Spleen (tissue), 13 donors: ENCODE measurements at regions of chr12 and their contacts with region 1.

Region 1: DNA sequence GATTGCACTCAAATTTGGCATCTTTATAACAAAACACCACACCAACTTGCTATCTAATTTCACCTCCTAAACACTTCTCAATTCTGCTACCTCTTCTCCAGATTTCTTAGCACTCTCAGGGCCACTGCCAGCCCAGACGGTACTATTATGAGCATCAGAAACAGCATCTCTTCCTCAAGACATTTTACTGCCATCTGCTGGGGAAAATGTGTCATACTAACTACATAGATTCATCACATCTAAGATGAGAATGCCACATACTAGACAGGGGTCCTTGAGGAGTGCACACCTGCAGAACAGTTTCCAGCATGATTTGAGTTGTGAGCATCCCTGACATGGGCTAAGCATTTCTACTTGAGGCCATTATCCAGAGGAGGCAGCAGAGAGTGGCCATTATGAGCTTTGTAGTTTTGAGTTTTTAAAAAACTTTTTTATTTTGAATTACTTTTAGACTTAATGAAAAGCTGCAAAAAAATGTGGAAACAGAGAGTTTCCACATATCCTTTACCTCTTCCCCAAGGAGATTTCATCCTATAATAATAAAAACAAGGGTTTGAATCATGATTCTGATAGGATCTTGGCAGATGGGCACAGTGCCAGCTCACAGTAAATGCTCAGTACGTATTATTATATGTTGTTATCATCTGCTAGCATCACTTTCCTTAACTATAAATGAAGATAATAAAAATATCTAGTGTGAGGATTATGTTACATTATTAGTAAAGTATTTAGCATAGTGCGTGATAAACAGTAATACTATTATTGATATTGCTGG is 15.2 kb upstream of the GRIP1 start:
- DNase-seq: no peak
- H3K4me3 ChIP-seq: no peak overlapping the region
- H3K27ac ChIP-seq: no peak overlapping the region
- H3K4me1 ChIP-seq: peaks cover 0 to 29% (median 11%) of the 10 kb centered on the region in 6 donors
- H3K27me3 ChIP-seq: peaks cover 0 to 2% (median 0%) of the 10 kb centered on the region in 7 donors
- CTCF ChIP-seq: peak in 10 of 11 experiments; percentile 12 to 67 (median 56)
- POLR2A ChIP-seq: no peak

Region 2: DNA sequence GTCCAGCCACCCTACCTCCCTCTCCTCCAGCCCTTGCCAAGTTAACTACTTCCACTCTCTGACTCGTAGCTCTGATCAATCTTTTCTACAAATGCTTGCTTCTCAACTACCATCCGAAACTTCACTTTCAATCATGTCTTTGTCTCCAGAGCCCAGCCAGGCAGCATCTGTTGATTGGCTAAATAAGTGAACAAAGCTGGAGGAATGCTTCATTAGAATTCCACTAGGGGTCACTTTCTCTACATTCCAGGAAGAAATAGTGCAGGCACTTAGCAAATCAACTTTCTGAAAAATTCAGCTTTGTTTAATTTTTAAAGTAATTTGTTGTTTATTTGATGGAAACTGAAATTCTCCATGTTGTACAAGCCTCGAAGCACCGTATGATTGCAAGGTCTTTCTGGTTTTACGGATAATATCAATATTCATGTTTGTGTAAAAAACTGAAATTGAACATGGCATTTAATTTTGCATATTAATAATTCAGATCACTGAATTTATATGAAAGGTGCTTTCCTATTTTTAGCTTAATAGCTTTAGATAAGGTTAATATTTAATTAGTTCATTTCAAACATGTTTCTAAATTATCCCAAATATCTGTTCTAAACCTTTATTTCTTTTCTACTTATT is 424.2 kb before region 1 on chr12:
- intact Hi-C with region 1: loop called (anchors 10 kb)
- DNase-seq: no peak
- H3K4me3 ChIP-seq: no peak overlapping the region
- H3K27ac ChIP-seq: peak overlapping the region in 5 of 8 donors; percentile 51 to 87 (median 68)
- H3K4me1 ChIP-seq: peaks cover 0 to 38% (median 16%) of the 10 kb centered on the region in 6 donors
- H3K27me3 ChIP-seq: no peaks in the 10 kb centered on the region
- CTCF ChIP-seq: peak; percentile 23 to 73 (median 56)
- POLR2A ChIP-seq: no peak

Region 3: DNA sequence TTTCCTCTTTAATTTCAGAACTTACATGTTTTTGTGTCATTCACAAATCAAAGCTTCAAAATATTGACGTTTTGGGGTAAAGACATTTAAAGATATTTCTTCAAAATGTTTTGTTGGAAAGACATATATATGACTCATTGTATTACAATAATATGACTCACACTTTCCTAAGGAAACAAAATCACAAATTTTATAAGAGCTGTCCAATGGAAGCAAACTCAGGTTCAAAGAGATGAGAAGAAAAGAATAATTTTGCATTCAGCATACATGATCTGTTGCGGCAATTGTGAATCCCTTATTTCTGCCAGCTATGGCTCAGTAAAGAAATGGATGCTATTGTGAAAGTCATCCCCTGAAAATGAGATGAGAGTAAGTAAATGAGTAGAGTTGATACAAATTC is 97.9 kb before region 1 on chr12:
- intact Hi-C with region 1: no loop called
- DNase-seq: no peak
- H3K4me3 ChIP-seq: no peak overlapping the region
- H3K27ac ChIP-seq: no peak overlapping the region
- H3K4me1 ChIP-seq: peaks cover 0 to 4% (median 0%) of the 10 kb centered on the region in 6 donors
- H3K27me3 ChIP-seq: no peaks in the 10 kb centered on the region
- CTCF ChIP-seq: no peak
- POLR2A ChIP-seq: no peak

Region 4: DNA sequence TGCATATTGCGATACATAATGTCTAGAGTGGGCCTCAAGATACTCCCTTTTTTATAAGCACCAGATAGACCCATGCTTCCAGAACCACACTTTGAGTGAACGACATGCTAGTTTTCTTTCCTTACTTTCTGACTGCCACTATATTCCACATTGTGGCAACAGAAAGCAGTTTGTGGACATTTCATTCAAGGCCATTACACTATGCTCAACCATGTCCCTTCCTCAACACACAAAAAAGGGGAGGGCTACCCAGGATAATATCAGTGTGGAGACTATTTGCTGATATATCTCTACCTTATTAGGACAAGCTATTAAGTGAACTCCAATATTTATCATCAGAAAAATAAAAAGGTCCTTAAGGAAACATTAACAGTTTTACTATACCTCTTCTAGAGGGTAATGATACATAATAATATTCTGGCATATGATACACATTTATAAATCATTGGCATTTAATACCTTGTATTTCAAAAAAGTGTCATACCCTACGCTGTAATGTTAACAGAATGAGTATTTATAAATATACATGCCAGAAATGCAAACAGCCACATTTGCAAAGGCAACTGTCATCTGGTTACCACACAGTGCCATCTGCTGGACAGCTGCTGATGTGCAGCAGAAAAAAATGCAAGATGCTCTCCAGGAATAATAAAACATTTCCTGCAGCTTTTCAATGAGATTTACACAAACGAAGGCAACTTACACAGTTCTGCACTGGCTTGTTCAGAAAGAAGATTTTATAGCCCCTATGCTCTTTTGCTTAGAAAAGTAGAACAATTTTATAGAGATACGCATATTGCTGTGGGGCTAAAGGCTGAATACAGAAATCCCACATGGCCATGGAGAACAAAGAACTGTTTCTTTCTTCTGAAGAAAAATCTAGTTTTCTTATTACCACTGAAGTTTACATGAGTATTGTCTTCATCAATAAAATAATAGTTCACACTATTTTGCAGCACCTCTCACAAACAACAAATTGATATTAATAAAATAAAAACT is 167.0 kb after region 1 on chr12:
- intact Hi-C with region 1: loop called (anchors 10 kb)
- DNase-seq: peak; percentile 78
- H3K4me3 ChIP-seq: no peak overlapping the region
- H3K27ac ChIP-seq: no peak overlapping the region
- H3K4me1 ChIP-seq: peaks cover 0 to 6% (median 0%) of the 10 kb centered on the region in 6 donors
- H3K27me3 ChIP-seq: peaks cover 0 to 3% (median 0%) of the 10 kb centered on the region in 7 donors
- CTCF ChIP-seq: peak; percentile 70 to 91 (median 82)
- POLR2A ChIP-seq: no peak